ENCODE measurements at regions of chr7 and their contacts with region 1.

Region 1: GRCh38 chr7:135499818-135500217 is 10.1 kb downstream of the CNOT4 start:
- DNase-seq: no peak
- ATAC-seq: no peak
- H3K4me3 ChIP-seq: no peak overlapping the region
- H3K27ac ChIP-seq: no peak overlapping the region; the same call in 1 of the 2 replicates
- H3K4me1 ChIP-seq: no peaks in the 10 kb centered on the region
- H3K27me3 ChIP-seq: no peaks in the 10 kb centered on the region
- CTCF ChIP-seq: no peak

Region 2: GRCh38 chr7:135414850-135415439 is 84.9 kb before region 1 on chr7:
- CTCF ChIA-PET with region 1: no interaction called
- POLR2A ChIA-PET with region 1: interaction called, 3 read pairs
- in situ Hi-C with region 1: no loop called
- intact Hi-C with region 1: loop called (anchors 5 kb)
- DNase-seq: peak; percentile 45
- ATAC-seq: peak; percentile 80; the same call in 1 of the 2 replicates
- H3K4me3 ChIP-seq: no peak overlapping the region
- H3K27ac ChIP-seq: no peak overlapping the region
- H3K4me1 ChIP-seq: no peaks in the 10 kb centered on the region
- H3K27me3 ChIP-seq: no peaks in the 10 kb centered on the region
- CTCF ChIP-seq: peak; percentile 78

Measured in Panc1 (cell line).